ENCODE measurements at regions of chr7 and their contacts with region 1.

Region 1: DNA sequence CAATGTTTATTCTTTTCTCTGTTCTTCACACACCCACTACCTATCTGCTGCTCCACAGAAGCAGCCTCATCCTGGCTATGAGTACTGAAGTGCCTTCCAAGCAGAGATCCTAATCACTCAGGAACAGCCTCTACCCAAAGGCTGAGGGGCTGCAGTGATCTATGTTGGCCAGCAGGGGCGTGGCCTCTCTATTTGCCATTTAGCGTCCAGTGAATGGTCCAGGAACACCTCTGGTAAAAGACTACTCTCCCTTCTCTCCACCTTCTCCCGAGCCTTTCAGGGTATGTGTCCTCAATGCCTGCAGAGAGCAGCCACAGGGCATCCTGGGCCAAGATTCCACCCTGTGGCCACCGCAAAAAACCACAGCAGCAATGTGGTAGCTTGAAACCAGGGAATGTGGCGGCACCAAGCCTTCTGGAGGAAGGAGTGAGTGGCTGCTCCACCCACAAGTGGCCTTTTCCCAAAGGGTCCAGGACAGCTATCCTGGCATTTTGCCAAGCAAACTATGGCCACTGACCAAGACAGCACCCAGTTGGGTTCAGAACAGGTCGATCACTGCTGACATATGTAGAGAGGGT is 70.9 kb downstream of the SYPL1 start:
- DNase-seq: peak; percentile 34
- H3K4me3 ChIP-seq: no peak overlapping the region
- H3K27ac ChIP-seq: no peak overlapping the region
- H3K4me1 ChIP-seq: peaks cover 6% of the 10 kb centered on the region
- H3K27me3 ChIP-seq: no peaks in the 10 kb centered on the region
- CTCF ChIP-seq: peak; percentile 72 to 91

Region 2: DNA sequence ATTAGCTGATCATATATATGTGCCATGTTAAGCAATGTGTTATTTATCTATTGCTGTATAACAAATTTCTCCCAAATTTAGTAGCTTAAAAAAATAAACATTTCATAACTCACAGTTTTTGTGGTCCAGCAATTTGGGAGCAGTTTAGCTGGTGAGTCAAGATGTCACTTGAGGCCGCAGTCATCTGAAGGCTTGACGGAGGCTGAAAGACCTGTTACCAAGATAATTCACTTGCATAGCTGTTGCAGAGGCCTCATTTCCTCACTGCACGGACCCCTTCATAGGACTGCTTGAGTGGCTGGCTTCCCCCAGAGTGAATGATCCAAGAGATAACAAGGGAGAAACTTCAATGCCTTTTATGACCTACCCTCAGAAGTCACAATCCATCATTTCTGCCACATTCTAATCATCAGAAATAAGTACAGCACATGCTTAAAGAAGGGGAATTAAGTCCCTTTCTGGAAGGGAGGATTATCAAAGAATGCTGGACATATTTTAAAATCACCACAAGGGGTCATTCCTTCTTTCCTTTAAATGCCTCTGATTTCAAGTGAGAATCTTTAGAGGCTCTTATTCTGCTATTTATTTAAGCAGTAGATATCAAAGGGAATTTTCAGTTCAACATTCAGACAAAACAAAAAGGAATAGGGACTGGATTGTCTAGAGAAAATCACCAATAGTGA is 642.0 kb before region 1 on chr7:
- CTCF ChIA-PET with region 1: no interaction called
- dilution Hi-C with region 1: no loop called
- in situ Hi-C with region 1: loop called in 1 of 2 experiments (anchors 25 kb)
- intact Hi-C with region 1: loop called (anchors 5 kb)
- DNase-seq: no peak
- H3K4me3 ChIP-seq: no peak overlapping the region
- H3K27ac ChIP-seq: no peak overlapping the region
- H3K4me1 ChIP-seq: no peaks in the 10 kb centered on the region
- H3K27me3 ChIP-seq: no peaks in the 10 kb centered on the region
- CTCF ChIP-seq: peak; percentile 17 to 32

Region 3: GRCh38 chr7:105589356-105590077 is 451.7 kb before region 1 on chr7:
- CTCF ChIA-PET with region 1: no interaction called
- dilution Hi-C with region 1: no loop called
- in situ Hi-C with region 1: no loop called
- intact Hi-C with region 1: loop called (anchors 5 kb)
- DNase-seq: peak; percentile 76
- H3K4me3 ChIP-seq: no peak overlapping the region
- H3K27ac ChIP-seq: no peak overlapping the region
- H3K4me1 ChIP-seq: no peaks in the 10 kb centered on the region
- H3K27me3 ChIP-seq: no peaks in the 10 kb centered on the region
- CTCF ChIP-seq: peak; percentile 74 to 83

Region 4: GRCh38 chr7:105664816-105665525 is 376.3 kb before region 1 on chr7:
- CTCF ChIA-PET with region 1: no interaction called
- dilution Hi-C with region 1: no loop called
- in situ Hi-C with region 1: loop called in 1 of 2 experiments (anchors 10 kb)
- intact Hi-C with region 1: no loop called
- DNase-seq: no peak
- H3K4me3 ChIP-seq: no peak overlapping the region
- H3K27ac ChIP-seq: no peak overlapping the region
- H3K4me1 ChIP-seq: no peaks in the 10 kb centered on the region
- H3K27me3 ChIP-seq: no peaks in the 10 kb centered on the region
- CTCF ChIP-seq: no peak

Region 5: DNA sequence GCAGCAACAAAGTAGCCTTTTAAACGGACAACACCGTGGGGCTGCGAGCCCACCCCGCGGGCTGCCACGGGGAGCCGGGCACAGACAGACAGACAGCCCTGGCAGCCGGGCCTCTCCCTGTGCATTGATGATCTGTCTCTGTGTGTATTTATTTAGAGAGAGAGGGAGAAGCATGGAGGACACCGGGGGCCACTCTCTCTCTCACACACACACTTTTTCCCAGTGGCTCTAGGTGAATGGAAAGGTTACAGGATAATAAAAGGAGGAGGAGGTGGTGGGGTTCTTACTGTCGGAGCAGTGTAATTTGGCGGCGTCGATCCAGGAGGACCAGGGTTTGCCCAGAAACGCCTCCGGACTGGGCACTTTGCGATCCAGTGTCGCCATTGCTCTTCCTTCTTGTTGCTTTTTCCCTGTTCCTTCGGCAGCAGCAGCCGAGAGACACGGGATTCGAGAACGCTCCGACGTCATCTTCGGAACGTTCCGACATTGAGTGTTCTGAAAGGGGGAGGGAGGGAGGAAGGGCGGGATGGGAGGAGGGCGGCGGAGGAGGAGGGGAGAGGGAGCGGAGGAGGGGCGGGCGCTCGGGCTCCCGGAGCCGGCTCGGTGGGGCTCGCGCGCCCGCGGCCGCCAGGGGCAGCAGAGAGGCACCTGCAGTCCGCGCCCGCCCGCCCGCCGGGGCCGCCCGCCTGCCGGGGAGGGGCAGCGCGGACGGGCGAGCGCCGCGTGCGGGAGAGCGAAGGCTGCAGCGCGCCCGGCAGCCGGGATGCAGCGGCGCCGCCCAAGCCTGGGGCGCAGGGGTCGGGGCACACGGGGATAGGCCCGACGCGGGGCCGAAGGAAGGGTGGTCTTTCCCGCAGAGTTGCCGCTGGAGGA is 164.9 kb before region 1 on chr7 and contains the start of gene ATXN7L1:
- CTCF ChIA-PET with region 1: no interaction called
- dilution Hi-C with region 1: no loop called
- in situ Hi-C with region 1: no loop called
- intact Hi-C with region 1: loop called (anchors 2 kb)
- DNase-seq: peak; percentile 96
- H3K4me3 ChIP-seq: peak within 1 kb of the TSS; percentile 77 to 98 (median 93)
- H3K27ac ChIP-seq: peak within 1 kb of the TSS; percentile 93
- H3K4me1 ChIP-seq: peaks cover 17% of the 10 kb centered on the region
- H3K27me3 ChIP-seq: no peaks in the 10 kb centered on the region
- CTCF ChIP-seq: peak; percentile 29 to 39
- total RNA-seq, gene ATXN7L1: 5.8 to 10.9 TPM

Region 6: GRCh38 chr7:106009403-106010226 is 31.6 kb before region 1 on chr7:
- CTCF ChIA-PET with region 1: no interaction called
- dilution Hi-C with region 1: no loop called
- in situ Hi-C with region 1: no loop called
- intact Hi-C with region 1: loop called (anchors 1 kb)
- DNase-seq: peak; percentile 88
- H3K4me3 ChIP-seq: no peak overlapping the region
- H3K27ac ChIP-seq: no peak overlapping the region
- H3K4me1 ChIP-seq: peaks cover 8% of the 10 kb centered on the region
- H3K27me3 ChIP-seq: no peaks in the 10 kb centered on the region
- CTCF ChIP-seq: peak; percentile 74 to 96

Region 7: DNA sequence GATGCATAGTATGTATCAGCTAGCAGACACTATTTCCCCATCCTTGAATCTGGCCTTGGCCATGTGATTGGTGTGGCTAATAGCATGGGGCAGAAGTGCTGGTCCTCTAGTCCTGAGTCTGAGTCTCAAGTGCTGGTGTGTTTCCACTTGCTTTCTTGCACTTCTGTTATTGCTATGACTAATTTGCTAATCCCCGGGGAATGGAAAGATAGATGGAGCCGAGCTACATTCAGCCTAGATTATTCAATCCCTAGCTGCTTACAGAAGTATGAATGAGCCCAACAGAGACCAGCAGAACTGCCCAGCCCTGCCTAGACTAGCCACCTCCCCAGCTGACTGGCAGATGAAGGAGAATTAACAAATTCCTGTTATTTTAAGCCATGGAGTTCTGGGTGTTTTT is 124.1 kb after region 1 on chr7:
- CTCF ChIA-PET with region 1: no interaction called
- dilution Hi-C with region 1: no loop called
- in situ Hi-C with region 1: no loop called
- intact Hi-C with region 1: no loop called
- DNase-seq: no peak
- H3K4me3 ChIP-seq: no peak overlapping the region
- H3K27ac ChIP-seq: no peak overlapping the region
- H3K4me1 ChIP-seq: no peaks in the 10 kb centered on the region
- H3K27me3 ChIP-seq: no peaks in the 10 kb centered on the region
- CTCF ChIP-seq: no peak